ENCODE measurements at regions of chr3 and their contacts with region 1.

Region 1: GRCh38 chr3:38136777-38137614 is at the start of gene ACAA1:
- DNase-seq: peak; percentile 99
- ATAC-seq: peak; percentile 80
- H3K4me3 ChIP-seq: peak within 1 kb of the TSS; percentile 93
- H3K27ac ChIP-seq: peak within 1 kb of the TSS; percentile 95
- H3K4me1 ChIP-seq: peaks cover 76% of the 10 kb centered on the region
- H3K27me3 ChIP-seq: no peaks in the 10 kb centered on the region
- CTCF ChIP-seq: no peak
- total RNA-seq, gene ACAA1: 76.4 and 94.5 TPM in 2 replicates

Region 2: DNA sequence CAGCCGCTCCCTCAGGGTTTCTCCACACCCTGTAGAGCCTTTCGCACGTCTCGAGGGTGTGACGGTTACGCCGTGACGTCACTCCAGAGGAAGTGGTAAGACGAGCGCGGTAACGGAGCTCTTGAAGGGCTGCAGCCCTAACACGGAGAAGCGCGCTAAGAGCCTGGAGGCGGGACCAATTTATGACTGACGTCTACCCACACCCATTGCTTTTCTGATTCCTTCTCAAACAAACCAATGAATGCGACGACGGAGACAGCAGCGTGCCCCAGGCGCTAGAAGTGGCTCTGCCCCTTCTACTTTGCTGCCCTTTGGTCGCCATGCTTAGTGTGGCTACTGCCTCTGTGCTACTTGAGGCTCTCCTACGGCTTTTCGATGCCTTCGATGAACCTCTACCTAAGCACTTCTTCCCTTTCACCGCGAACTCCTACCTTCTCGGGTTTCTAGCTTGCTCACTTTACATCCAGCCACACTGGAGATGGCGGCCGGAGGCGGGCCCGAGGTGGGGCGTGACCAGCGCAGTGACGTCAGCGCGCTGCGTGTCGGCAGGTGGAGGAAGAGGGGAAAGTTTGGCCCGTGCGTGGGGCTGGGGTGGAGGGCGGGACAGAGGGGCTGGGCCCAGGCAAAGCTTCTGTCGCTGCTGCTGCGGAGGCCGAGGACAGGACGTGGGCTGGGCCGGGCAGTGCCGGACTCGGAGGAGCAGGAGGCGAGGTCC is 28.1 kb after region 1 on chr3 and contains the start of gene OXSR1:
- CTCF ChIA-PET with region 1: interaction called, 4 read pairs
- POLR2A ChIA-PET with region 1: interaction called, 22 read pairs
- intact Hi-C with region 1: loop called (anchors 1 kb)
- DNase-seq: peak; percentile 100
- ATAC-seq: peak; percentile 84
- H3K4me3 ChIP-seq: peak within 1 kb of the TSS; percentile 94
- H3K27ac ChIP-seq: peak within 1 kb of the TSS; percentile 97
- H3K4me1 ChIP-seq: peaks cover 44% of the 10 kb centered on the region
- H3K27me3 ChIP-seq: no peaks in the 10 kb centered on the region
- CTCF ChIP-seq: no peak
- total RNA-seq, gene OXSR1: 42.2 and 47.7 TPM in 2 replicates

Region 3: DNA sequence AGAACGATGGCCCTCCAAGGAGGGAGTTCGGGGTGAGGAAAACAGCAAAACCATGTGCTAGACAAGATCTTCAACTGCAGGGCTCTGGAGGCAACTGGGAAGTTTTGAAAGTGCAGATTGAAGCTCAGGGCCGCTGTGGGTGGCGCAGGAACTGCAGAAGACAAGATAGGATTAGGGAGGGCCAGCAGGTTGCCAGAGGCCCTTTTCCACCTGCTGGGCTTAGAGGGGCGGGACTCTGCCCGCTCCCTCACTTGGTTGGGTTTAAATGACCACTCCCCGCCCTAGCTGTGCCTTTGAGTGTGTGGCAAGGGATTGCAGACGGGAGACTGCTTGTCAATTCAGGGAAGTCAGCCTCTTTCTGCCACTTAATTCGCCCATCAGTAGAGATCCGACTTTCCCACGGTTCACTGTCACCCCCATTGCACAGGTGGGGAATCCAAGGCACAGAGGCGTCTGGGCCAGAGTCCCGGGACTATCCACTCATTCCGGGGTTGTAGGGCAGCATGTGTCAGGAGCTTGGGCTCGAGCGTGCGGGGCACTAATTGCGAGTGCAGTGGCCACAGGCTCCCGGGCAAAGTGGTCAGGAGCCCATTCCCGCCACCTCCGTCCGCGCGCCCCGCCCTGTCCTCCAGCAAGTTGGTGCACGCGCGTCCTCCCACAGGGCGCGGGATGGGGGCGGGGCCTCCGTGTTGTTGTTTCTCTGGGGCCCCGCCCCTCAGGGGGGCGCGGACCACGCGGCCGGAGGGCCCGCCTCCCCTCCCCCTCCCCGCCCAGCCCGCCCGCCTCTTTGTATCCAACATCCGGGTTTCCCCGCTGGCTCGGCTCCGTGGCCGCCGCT is 316.3 kb after region 1 on chr3 and contains the start of gene ACVR2B:
- CTCF ChIA-PET with region 1: no interaction called
- POLR2A ChIA-PET with region 1: no interaction called
- intact Hi-C with region 1: loop called (anchors 10 kb)
- DNase-seq: peak; percentile 82
- ATAC-seq: peak; percentile 42
- H3K4me3 ChIP-seq: peak within 1 kb of the TSS; percentile 82
- H3K27ac ChIP-seq: no peak within 1 kb of the TSS
- H3K4me1 ChIP-seq: peaks cover 18% of the 10 kb centered on the region; the same call in 1 of the 2 replicates
- H3K27me3 ChIP-seq: no peaks in the 10 kb centered on the region
- CTCF ChIP-seq: no peak
- total RNA-seq, gene ACVR2B: 1.5 and 1.8 TPM in 2 replicates

Region 4: GRCh38 chr3:39383045-39383880 is 1246.3 kb after region 1 on chr3 and contains the start of gene SLC25A38:
- CTCF ChIA-PET with region 1: no interaction called
- POLR2A ChIA-PET with region 1: no interaction called
- intact Hi-C with region 1: loop called (anchors 10 kb)
- DNase-seq: peak; percentile 84
- ATAC-seq: peak; percentile 81
- H3K4me3 ChIP-seq: peak within 1 kb of the TSS; percentile 73
- H3K27ac ChIP-seq: peak within 1 kb of the TSS; percentile 66
- H3K4me1 ChIP-seq: peaks cover 23% of the 10 kb centered on the region
- H3K27me3 ChIP-seq: no peaks in the 10 kb centered on the region
- CTCF ChIP-seq: peak; percentile 28; the same call in 1 of the 2 replicates
- total RNA-seq, gene SLC25A38: 29.7 and 32.0 TPM in 2 replicates